ENCODE measurements at regions of chr3 and their contacts with region 1.

Region 1: DNA sequence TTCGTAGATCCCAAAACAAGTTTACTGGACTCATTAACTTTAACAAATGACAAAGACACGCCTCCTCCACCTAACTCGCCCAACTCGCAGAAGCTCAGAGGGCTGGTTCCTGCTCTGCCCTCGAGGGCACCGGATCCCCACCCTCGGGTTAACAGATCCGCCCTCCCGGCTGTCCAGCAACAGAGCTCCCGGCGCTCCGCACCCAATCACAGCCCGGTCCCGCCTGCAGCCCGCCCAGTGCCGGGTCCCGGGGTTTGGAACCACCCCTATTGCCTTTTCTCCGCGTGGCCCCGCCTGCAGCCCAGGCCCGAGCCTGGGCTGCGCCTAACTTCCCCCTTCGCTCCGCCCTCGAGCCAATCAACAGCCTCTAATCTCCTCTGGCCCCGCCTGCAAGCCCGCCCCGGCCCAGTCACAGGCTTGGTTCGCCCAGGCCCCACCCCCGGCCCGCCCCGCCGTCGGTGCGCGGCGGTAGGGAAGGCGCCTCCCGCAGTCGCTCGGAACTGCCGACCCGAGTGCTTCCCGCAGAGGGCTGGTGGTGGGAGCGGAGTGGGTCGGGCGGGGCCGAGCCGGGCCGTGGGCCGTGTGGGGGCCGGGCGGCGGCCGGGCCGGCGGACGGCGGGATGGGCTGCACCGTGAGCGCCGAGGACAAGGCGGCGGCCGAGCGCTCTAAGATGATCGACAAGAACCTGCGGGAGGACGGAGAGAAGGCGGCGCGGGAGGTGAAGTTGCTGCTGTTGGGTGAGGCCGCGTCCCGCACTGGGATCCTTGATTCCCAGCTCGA is at the start of gene GNAI2:
- DNase-seq: peak; percentile 91
- ATAC-seq: peak; percentile 93
- H3K4me3 ChIP-seq: peak within 1 kb of the TSS; percentile 100
- H3K27ac ChIP-seq: peak within 1 kb of the TSS; percentile 91
- H3K4me1 ChIP-seq: peaks cover 14% of the 10 kb centered on the region
- H3K27me3 ChIP-seq: no peaks in the 10 kb centered on the region
- CTCF ChIP-seq: no peak
- EP300 ChIP-seq: no peak
- POLR2A ChIP-seq: peak; percentile 94
- RAD21 ChIP-seq: no peak
- polyA plus RNA-seq, gene GNAI2: 5.0 to 15.3 TPM

Region 2: DNA sequence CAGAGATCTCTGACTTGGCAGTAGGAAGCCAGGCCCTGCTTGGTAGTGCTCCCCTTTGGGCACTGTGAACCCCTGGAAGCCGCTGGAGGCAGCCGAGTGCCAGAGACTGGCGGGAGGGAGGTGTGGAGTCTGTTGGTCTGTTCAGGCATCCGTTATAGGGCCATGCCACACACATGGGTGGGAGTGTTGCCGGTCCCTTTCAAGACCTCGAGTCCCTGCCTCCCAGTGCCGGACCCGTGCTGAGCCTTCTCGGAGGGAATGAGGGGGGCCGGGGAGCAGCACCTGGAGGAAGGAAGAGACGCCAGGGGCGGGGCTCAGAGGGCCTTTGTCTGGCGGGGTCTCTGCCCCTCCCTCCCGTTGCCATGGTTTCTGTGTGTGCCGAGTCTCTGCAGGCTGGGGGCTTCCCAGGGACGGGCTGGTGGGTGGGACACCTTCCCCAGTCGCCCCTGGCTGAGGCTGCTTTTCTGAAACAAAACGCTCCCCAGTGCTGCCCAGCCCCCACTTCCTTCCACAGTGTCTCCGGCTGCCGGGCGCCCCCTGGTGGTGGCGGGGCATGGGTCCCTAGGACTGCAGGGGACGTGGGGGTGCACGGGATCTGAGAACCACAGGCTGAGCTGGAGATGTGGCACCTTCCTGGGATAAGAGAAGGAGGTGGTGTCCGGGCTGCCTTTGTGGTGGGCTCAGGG is 10.1 kb after region 1 on chr3:
- CTCF ChIA-PET with region 1: interaction called, 149 read pairs
- POLR2A ChIA-PET with region 1: interaction called, 17 read pairs
- RAD21 ChIA-PET with region 1: interaction called, 73 read pairs
- SMC1A ChIA-PET with region 1: interaction called, 7 read pairs
- in situ Hi-C with region 1: no loop called
- intact Hi-C with region 1: no loop called
- DNase-seq: no peak
- ATAC-seq: peak; percentile 90
- H3K4me3 ChIP-seq: peak overlapping the region; percentile 70
- H3K27ac ChIP-seq: peak overlapping the region; percentile 71
- H3K4me1 ChIP-seq: peaks cover 52% of the 10 kb centered on the region
- H3K27me3 ChIP-seq: no peaks in the 10 kb centered on the region
- CTCF ChIP-seq: peak; percentile 96 to 99 (median 98)
- EP300 ChIP-seq: peak in 1 of 2 experiments; percentile 42; a peak in 1 of 4 replicates
- POLR2A ChIP-seq: peak; percentile 57
- RAD21 ChIP-seq: peak; percentile 89

Region 3: GRCh38 chr3:50292159-50293078 is 56.5 kb after region 1 on chr3 and contains the start of gene IFRD2:
- CTCF ChIA-PET with region 1: no interaction called
- POLR2A ChIA-PET with region 1: interaction called, 5 read pairs
- RAD21 ChIA-PET with region 1: interaction called, 3 read pairs
- SMC1A ChIA-PET with region 1: no interaction called
- in situ Hi-C with region 1: no loop called
- intact Hi-C with region 1: loop called (anchors 1 kb)
- DNase-seq: peak; percentile 92
- ATAC-seq: peak; percentile 99
- H3K4me3 ChIP-seq: peak within 1 kb of the TSS; percentile 97
- H3K27ac ChIP-seq: peak within 1 kb of the TSS; percentile 66
- H3K4me1 ChIP-seq: peaks cover 3% of the 10 kb centered on the region; the same call in 1 of the 2 replicates
- H3K27me3 ChIP-seq: no peaks in the 10 kb centered on the region
- CTCF ChIP-seq: no peak
- EP300 ChIP-seq: no peak
- POLR2A ChIP-seq: peak; percentile 89
- RAD21 ChIP-seq: no peak
- polyA plus RNA-seq, gene IFRD2: 33.7 to 82.8 TPM

Region 4: GRCh38 chr3:50580683-50581458 is 345.0 kb after region 1 on chr3:
- CTCF ChIA-PET with region 1: no interaction called
- POLR2A ChIA-PET with region 1: no interaction called
- RAD21 ChIA-PET with region 1: no interaction called
- SMC1A ChIA-PET with region 1: no interaction called
- in situ Hi-C with region 1: no loop called
- intact Hi-C with region 1: no loop called
- DNase-seq: no peak
- ATAC-seq: no peak
- H3K4me3 ChIP-seq: no peak overlapping the region
- H3K27ac ChIP-seq: no peak overlapping the region
- H3K4me1 ChIP-seq: no peaks in the 10 kb centered on the region
- H3K27me3 ChIP-seq: no peaks in the 10 kb centered on the region
- CTCF ChIP-seq: no peak
- EP300 ChIP-seq: no peak
- POLR2A ChIP-seq: no peak
- RAD21 ChIP-seq: no peak

Measured in GM12878 (cell line).